Esophagus muscularis mucosa (tissue), 4 donors: ENCODE measurements at regions of chr9 and their contacts with region 1.

Region 1: DNA sequence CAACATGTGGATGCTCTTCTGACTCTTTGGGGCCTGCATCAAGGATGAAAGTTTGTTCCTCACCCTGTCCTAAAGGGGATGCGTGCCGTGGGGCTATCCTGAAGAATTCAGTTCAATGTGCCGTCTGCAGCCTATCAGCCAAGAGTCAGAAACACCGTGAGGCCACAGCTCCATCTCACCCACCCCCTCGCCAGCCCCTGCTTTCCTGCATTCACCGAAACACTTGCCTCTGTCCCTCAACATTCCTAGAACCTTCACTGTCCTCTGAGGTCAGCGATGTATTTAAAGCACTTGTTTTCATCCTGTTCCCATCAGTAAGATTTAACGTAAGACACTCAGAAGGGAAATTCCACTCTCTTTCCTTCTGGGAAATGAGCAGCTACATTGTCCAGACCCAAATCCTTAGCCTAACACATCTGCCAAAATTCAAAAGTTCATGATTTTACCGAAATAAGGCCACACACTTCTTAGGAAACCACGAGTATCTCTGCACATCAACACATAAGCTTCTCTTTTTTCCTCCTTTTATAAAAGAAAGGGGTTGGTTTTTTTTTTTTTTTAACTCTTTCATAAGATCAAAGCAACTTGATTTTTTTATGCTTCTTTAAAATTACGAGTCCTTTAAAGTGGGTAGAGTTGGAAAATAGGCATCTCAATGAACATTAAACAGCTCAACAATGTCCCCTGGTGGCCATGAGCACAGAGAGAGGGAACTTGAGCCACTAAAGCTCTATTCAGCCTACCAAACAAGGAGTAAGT is 100.7 kb downstream of the SUSD1 start:
- DNase-seq: peak; percentile 92
- H3K4me3 ChIP-seq: peak overlapping the region in 3 of 4 donors; percentile 1 to 23 (median 17)
- H3K27ac ChIP-seq: peak overlapping the region; percentile 73 to 83 (median 76)
- H3K4me1 ChIP-seq: peaks cover 29 to 41% (median 34%) of the 10 kb centered on the region in 4 donors
- H3K27me3 ChIP-seq: no peaks in the 10 kb centered on the region
- CTCF ChIP-seq: peak; percentile 89 to 94 (median 94)
- EP300 ChIP-seq: peak; percentile 96
- POLR2A ChIP-seq: no peak

Region 2: GRCh38 chr9:111759762-111760639 is 314.4 kb before region 1 on chr9:
- intact Hi-C with region 1: loop called (anchors 1 kb)
- DNase-seq: no peak
- H3K4me3 ChIP-seq: no peak overlapping the region
- H3K27ac ChIP-seq: no peak overlapping the region
- H3K4me1 ChIP-seq: peaks cover 0 to 8% (median 0%) of the 10 kb centered on the region in 4 donors
- H3K27me3 ChIP-seq: no peaks in the 10 kb centered on the region
- CTCF ChIP-seq: peak; percentile 67 to 73 (median 72)
- EP300 ChIP-seq: no peak
- POLR2A ChIP-seq: no peak

Region 3: DNA sequence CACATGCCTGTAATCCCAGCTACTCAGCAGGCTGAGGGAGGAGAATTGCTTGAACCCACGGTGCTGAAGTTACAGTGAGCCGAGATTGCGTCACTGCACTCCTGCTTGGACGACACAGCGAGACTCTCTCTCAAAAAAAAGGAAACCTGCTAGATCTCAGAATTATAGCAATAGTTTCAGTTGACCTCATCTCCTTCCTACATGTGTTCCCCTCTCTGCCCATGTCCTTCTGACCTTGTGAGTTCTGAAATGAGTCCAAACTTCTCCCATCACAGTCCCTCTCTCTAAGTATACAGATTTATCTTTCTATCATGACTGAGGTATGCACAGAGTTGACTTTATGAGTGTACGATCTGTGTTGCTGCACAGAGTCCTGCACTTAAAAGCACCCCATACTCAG is 235.0 kb before region 1 on chr9:
- intact Hi-C with region 1: loop called (anchors 10 kb)
- DNase-seq: no peak
- H3K4me3 ChIP-seq: no peak overlapping the region
- H3K27ac ChIP-seq: no peak overlapping the region
- H3K4me1 ChIP-seq: peaks cover 0 to 23% (median 13%) of the 10 kb centered on the region in 4 donors
- H3K27me3 ChIP-seq: no peaks in the 10 kb centered on the region
- CTCF ChIP-seq: no peak
- EP300 ChIP-seq: no peak
- POLR2A ChIP-seq: no peak

Region 4: DNA sequence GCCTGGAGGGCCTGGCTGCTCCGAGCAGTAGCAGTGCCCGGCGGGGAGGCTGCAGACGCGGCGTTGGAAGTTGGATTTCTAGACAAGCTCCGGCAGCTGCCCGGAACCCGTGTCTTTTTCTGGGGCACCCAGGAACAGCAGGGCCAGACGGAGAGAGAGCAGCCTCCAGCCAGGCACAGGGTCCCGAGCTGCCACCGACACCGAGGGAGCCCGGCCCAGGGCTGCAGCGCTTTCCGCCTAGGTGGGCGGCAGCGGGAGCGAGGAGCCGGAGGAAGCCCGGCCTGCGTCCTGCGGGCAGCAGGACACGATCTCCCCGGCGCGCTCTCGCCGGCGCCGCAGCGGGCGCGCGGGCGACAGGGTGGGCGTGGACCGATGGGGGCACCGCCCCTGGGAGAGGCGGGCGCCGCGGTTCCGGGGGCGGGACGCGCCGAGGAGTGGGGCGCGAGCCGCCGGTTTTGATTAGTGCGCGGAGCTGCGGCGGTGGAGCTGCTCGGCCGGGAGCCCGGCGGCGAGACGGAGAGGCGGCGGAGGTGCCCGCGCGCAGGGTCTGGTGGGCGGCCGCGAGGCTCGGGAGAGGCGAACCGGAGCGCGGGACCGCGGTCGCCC is 178.0 kb before region 1 on chr9 and contains the start of gene UGCG:
- intact Hi-C with region 1: loop called (anchors 5 kb)
- DNase-seq: peak; percentile 95
- H3K4me3 ChIP-seq: peak within 1 kb of the TSS; percentile 83 to 99 (median 94)
- H3K27ac ChIP-seq: peak within 1 kb of the TSS; percentile 94 to 99 (median 97)
- H3K4me1 ChIP-seq: peaks cover 42 to 46% (median 44%) of the 10 kb centered on the region in 4 donors
- H3K27me3 ChIP-seq: no peaks in the 10 kb centered on the region
- CTCF ChIP-seq: no peak
- EP300 ChIP-seq: no peak
- POLR2A ChIP-seq: peak; percentile 94
- total RNA-seq, gene UGCG: 24.5 to 87.8 (median 33.5) TPM

Region 5: DNA sequence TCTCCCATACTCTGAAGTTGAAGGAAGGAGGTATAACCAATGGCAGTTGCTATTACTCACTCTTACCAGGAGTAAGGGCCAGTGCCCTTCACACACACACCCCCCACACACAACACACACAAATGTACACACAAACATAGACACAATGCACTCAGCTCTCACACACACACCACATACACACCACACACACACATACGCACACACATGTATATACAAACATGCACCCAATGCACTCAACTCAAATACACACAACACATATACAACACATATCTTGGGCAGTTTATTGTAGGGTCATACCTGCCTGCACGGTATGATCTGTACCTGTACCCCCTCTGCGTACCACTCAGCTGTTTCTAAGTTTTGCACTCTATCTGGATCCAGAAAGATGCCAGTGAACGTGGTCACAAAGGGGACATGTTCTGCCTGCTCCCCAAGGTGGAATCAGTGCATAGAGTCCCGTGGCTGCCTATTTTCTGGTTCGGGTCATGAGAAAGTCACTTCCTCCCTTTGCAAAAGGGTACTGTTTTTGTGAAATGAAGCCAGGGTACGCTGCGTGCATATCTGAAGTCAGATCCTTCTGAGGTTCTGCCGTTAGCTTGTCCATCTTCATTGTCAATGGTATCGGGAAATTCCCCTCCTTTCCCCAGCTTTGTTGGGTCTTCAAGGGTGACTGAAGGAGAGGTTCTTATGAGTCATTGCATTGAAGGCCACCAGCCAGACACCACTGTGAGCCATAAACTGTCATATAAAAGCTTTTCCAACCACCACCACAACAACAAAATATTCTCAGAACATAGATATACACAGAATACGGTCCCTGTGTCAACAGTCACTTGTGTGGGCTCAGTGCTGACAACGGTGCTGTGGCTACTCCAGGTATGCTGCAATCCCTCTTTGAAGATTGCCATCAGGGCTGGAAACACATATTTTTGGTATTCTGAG is 45.9 kb before region 1 on chr9:
- intact Hi-C with region 1: no loop called
- DNase-seq: no peak
- H3K4me3 ChIP-seq: no peak overlapping the region
- H3K27ac ChIP-seq: no peak overlapping the region
- H3K4me1 ChIP-seq: peaks cover 6 to 27% (median 19%) of the 10 kb centered on the region in 4 donors
- H3K27me3 ChIP-seq: no peaks in the 10 kb centered on the region
- CTCF ChIP-seq: no peak
- EP300 ChIP-seq: no peak
- POLR2A ChIP-seq: no peak